ENCODE measurements at regions of chr4 and their contacts with region 1.

Region 1: DNA sequence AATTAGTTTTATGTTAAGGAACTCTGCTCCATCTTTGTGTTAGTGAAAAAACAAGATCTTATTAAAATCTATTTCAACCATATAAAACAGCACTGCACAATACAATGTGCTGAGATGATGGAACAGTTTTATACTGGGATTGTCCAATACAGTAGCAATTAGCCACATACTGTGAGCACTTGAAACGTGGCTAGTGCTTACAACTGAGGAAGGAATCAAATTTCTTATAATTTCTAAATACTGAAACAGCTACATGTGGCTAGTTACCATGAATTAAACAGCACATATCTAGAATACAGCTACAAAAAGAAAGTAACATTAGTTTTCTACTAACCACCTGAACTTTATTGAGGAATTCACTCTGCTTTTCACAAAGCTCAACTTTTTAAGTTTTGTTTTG is 14.7 kb downstream of the NFXL1 start:
- DNase-seq: no peak
- ATAC-seq: no peak
- H3K4me3 ChIP-seq: no peak overlapping the region
- H3K27ac ChIP-seq: no peak overlapping the region
- H3K4me1 ChIP-seq: no peaks in the 10 kb centered on the region
- H3K27me3 ChIP-seq: no peaks in the 10 kb centered on the region
- CTCF ChIP-seq: no peak
- EP300 ChIP-seq: no peak
- POLR2A ChIP-seq: no peak
- RAD21 ChIP-seq: no peak

Region 2: GRCh38 chr4:47617607-47618006 is 282.0 kb before region 1 on chr4:
- CTCF ChIA-PET with region 1: no interaction called
- POLR2A ChIA-PET with region 1: no interaction called
- in situ Hi-C with region 1: no loop called
- intact Hi-C with region 1: no loop called
- DNase-seq: no peak
- ATAC-seq: no peak
- H3K4me3 ChIP-seq: no peak overlapping the region
- H3K27ac ChIP-seq: no peak overlapping the region
- H3K4me1 ChIP-seq: no peaks in the 10 kb centered on the region
- H3K27me3 ChIP-seq: no peaks in the 10 kb centered on the region
- CTCF ChIP-seq: no peak
- EP300 ChIP-seq: no peak
- POLR2A ChIP-seq: no peak
- RAD21 ChIP-seq: no peak

Region 3: DNA sequence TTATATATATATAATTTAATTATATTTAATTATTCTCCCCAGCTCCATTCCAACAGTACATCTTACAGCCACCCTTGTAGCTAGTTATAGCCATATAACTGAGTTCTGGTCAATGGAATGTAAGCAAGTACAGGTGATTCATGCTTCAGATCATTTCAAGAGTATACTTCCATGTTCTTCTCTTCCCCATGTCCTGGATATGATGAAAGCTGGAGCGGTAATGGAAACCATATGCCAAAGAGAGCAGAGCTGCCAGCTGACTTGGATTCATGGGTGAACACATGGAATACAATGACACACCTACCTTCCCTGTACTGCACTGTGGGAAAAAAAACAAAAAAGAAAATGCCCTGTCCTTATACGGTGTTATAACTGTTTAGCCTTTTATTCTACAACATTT is 44.3 kb before region 1 on chr4:
- CTCF ChIA-PET with region 1: no interaction called
- POLR2A ChIA-PET with region 1: no interaction called
- in situ Hi-C with region 1: no loop called
- intact Hi-C with region 1: loop called (anchors 5 kb)
- DNase-seq: no peak
- ATAC-seq: no peak
- H3K4me3 ChIP-seq: no peak overlapping the region
- H3K27ac ChIP-seq: no peak overlapping the region
- H3K4me1 ChIP-seq: no peaks in the 10 kb centered on the region
- H3K27me3 ChIP-seq: no peaks in the 10 kb centered on the region
- CTCF ChIP-seq: no peak
- EP300 ChIP-seq: no peak
- POLR2A ChIP-seq: no peak
- RAD21 ChIP-seq: no peak